Psoas muscle (tissue), 8 donors: ENCODE measurements at regions of chr12 and their contacts with region 1.

Region 1: DNA sequence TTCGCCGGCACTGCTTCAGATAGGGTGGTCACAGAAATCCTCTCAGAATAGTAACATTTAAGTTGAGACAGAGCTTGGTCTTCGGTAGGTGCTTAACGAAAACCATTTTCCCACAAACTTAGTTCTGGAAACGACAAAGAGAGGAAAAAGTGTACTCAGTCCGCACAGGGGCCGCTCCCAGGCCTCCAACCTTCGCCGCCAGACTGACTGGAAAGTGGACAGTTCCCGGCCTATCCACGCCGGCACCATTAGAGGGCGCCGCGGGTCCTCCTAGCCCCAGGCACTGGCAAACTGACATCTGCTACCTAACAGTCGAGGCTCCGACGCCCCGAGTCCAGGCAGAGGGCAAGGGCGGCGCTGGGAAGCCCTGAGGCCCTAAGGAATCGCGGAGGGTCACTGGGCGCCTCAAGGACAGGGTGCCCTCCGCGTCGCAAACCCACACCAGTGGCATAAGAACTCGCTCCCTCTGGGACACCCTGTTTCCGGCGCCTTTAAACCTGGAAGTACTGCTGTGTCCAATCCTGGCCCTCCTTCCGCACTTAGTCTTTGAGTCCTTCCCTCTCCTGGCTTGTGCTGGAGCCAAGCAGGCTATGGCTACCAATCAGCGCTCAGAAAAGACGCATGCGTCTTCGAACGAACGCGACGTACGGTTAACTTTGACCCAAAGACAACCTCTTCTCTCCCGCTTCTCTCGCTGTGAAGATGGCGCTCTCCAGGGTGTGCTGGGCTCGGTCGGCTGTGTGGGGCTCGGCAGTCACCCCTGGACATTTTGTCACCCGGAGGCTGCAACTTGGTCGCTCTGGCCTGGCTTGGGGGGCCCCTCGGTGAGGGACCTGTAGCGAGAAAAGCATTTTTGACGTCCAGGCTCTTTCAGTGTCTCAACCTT is at the start of gene LETMD1:
- DNase-seq: peak; percentile 91 to 96
- ATAC-seq: peak; percentile 97 to 99 (median 98)
- H3K4me3 ChIP-seq: peak within 1 kb of the TSS; percentile 79
- H3K27ac ChIP-seq: peak within 1 kb of the TSS; percentile 97
- H3K4me1 ChIP-seq: peaks cover 20% of the 10 kb centered on the region
- H3K27me3 ChIP-seq: no peaks in the 10 kb centered on the region
- CTCF ChIP-seq: peak; percentile 90
- total RNA-seq, gene LETMD1: 22.2 to 29.5 (median 28.3) TPM

Region 2: GRCh38 chr12:51127050-51127729 is 79.3 kb after region 1 on chr12:
- intact Hi-C with region 1: no loop called
- DNase-seq: no peak
- ATAC-seq: peak in 3 of 4 donors; percentile 47 to 64 (median 51)
- H3K4me3 ChIP-seq: no peak overlapping the region
- H3K27ac ChIP-seq: peak overlapping the region; percentile 46
- H3K4me1 ChIP-seq: peaks cover 31% of the 10 kb centered on the region
- H3K27me3 ChIP-seq: no peaks in the 10 kb centered on the region
- CTCF ChIP-seq: no peak

Region 3: GRCh38 chr12:51238510-51239334 is 190.8 kb after region 1 on chr12 and contains the start of gene DAZAP2:
- intact Hi-C with region 1: loop called in 1 of 2 experiments (anchors 2 kb)
- DNase-seq: peak; percentile 95 to 98
- ATAC-seq: peak; percentile 98 to 99 (median 98)
- H3K4me3 ChIP-seq: peak within 1 kb of the TSS; percentile 100
- H3K27ac ChIP-seq: peak within 1 kb of the TSS; percentile 100
- H3K4me1 ChIP-seq: peaks cover 27% of the 10 kb centered on the region
- H3K27me3 ChIP-seq: no peaks in the 10 kb centered on the region
- CTCF ChIP-seq: peak; percentile 28
- total RNA-seq, gene DAZAP2: 62.4 to 157 (median 105) TPM

Region 4: DNA sequence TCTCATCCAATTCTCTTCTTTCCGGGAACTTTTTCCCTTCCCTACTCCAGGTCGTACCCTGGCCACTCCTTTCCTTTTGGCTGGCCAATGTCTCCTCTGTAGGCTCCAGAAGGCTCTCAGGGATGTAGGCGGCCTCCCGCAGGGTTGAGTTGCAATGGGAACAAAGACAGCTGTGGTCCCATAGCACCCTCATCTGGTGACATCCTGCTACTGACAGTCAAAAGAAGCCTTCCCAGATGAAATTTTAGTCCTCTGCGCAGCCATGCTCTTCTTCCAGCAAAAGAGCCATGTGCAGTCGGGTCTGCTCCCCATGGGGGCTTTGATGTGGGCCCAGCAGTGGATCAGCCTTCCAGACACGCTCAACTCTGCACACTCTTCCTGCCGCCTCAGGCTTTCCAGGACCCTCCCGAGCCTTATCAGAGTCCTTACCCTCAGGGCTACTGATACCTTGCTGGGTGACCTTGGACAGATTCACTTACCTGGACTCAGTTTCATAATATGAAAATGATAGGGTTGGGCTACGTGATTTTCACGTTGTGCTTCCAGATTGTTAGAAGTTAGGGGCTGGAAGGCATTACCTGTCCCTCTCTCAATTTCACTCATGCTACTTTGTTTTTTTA is 304.1 kb after region 1 on chr12:
- intact Hi-C with region 1: no loop called
- DNase-seq: no peak
- ATAC-seq: peak; percentile 49 to 71 (median 65)
- H3K4me3 ChIP-seq: no peak overlapping the region
- H3K27ac ChIP-seq: no peak overlapping the region
- H3K4me1 ChIP-seq: no peaks in the 10 kb centered on the region
- H3K27me3 ChIP-seq: no peaks in the 10 kb centered on the region
- CTCF ChIP-seq: peak; percentile 46